ENCODE measurements at regions of chr7 and their contacts with region 1.

Region 1: GRCh38 chr7:103347507-103348267 is at the start of gene PSMC2:
- DNase-seq: peak; percentile 94
- ATAC-seq: peak; percentile 66
- H3K4me3 ChIP-seq: peak within 1 kb of the TSS; percentile 61
- H3K27ac ChIP-seq: peak within 1 kb of the TSS; percentile 74
- H3K4me1 ChIP-seq: no peaks in the 10 kb centered on the region; the same call in 1 of the 2 replicates
- H3K27me3 ChIP-seq: no peaks in the 10 kb centered on the region
- CTCF ChIP-seq: no peak
- POLR2A ChIP-seq: peak; percentile 71; the same call in 1 of the 2 replicates
- RAD21 ChIP-seq: no peak
- total RNA-seq, gene PSMC2: 311 and 353 TPM in 2 replicates

Region 2: GRCh38 chr7:103668279-103668941 is 320.7 kb after region 1 on chr7:
- CTCF ChIA-PET with region 1: no interaction called
- POLR2A ChIA-PET with region 1: no interaction called
- dilution Hi-C with region 1: no loop called
- in situ Hi-C with region 1: no loop called
- intact Hi-C with region 1: no loop called
- DNase-seq: no peak
- ATAC-seq: no peak
- H3K4me3 ChIP-seq: no peak overlapping the region
- H3K27ac ChIP-seq: no peak overlapping the region
- H3K4me1 ChIP-seq: no peaks in the 10 kb centered on the region; the same call in 1 of the 2 replicates
- H3K27me3 ChIP-seq: no peaks in the 10 kb centered on the region
- CTCF ChIP-seq: no peak
- POLR2A ChIP-seq: no peak
- RAD21 ChIP-seq: no peak

Region 3: DNA sequence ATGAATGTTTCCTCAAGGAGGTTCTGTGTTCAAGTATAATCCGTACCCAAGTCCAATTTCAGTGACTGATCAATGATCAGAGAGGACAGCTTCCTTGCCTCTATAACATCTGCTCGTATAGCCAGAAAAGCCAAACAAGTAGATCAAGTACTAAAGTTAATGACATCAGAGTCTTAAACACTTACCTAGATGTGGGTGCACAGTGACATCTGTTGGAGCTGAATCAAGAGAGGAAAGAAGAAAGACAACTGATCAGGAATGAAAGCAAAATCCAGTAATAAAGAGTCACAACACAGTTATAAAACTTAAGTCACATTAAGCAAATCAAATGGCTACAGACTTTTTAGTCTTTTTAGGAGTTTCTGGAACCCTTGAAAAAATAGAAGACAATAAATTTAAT is 405.3 kb after region 1 on chr7:
- CTCF ChIA-PET with region 1: no interaction called
- POLR2A ChIA-PET with region 1: interaction called, 13 read pairs
- dilution Hi-C with region 1: no loop called
- in situ Hi-C with region 1: no loop called
- intact Hi-C with region 1: no loop called
- DNase-seq: peak; percentile 27
- ATAC-seq: no peak
- H3K4me3 ChIP-seq: no peak overlapping the region
- H3K27ac ChIP-seq: no peak overlapping the region
- H3K4me1 ChIP-seq: no peaks in the 10 kb centered on the region
- H3K27me3 ChIP-seq: no peaks in the 10 kb centered on the region
- CTCF ChIP-seq: peak; percentile 25; the same call in 1 of the 2 replicates
- POLR2A ChIP-seq: no peak
- RAD21 ChIP-seq: peak; percentile 50

Region 4: DNA sequence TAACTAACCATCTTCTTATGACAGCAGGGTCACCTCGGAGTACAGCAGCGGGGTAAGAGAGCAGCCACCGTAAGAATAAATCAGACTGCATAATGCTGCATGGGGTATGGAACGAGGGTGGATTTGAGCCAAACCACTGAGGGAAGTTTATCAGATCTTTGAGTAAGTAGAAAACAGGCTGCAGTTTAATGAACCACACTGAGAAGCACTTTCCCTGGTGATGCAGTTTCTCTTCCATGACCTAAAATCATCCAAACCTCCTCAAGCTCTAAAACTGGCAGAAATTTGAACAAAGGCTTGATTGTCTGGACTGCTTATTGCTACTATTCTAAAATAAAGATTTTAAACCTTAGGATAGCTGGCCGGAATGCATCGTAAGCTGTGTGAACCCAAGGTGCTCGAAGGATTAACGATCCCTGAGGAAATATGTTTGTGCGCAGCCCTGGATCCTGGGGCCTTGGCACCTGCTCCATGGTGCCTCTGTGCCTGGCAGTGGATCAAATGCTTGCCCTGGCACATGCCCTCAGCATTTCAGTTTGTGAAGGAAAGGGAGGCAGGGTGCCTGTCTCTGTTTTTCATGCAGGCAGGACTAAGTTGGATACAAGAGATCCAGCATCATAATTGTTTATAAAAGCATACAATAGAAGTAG is 1303.4 kb after region 1 on chr7:
- CTCF ChIA-PET with region 1: no interaction called
- POLR2A ChIA-PET with region 1: no interaction called
- dilution Hi-C with region 1: no loop called
- in situ Hi-C with region 1: no loop called
- intact Hi-C with region 1: no loop called
- DNase-seq: no peak
- ATAC-seq: no peak
- H3K4me3 ChIP-seq: no peak overlapping the region
- H3K27ac ChIP-seq: no peak overlapping the region
- H3K4me1 ChIP-seq: no peaks in the 10 kb centered on the region
- H3K27me3 ChIP-seq: no peaks in the 10 kb centered on the region
- CTCF ChIP-seq: no peak
- POLR2A ChIP-seq: no peak
- RAD21 ChIP-seq: no peak

Measured in IMR-90 (cell line).